Right lobe of liver (tissue), 6 donors: ENCODE measurements at regions of chr3 and their contacts with region 1.

Region 1: GRCh38 chr3:159252772-159253384 is 451.0 kb downstream of the MFSD1 start:
- DNase-seq: no peak
- ATAC-seq: peak; percentile 67 to 85 (median 75)
- H3K4me3 ChIP-seq: no peak overlapping the region
- H3K27ac ChIP-seq: no peak overlapping the region
- H3K4me1 ChIP-seq: no peaks in the 10 kb centered on the region
- H3K27me3 ChIP-seq: no peaks in the 10 kb centered on the region
- CTCF ChIP-seq: peak; percentile 63 to 91 (median 74)
- POLR2A ChIP-seq: no peak

Region 2: DNA sequence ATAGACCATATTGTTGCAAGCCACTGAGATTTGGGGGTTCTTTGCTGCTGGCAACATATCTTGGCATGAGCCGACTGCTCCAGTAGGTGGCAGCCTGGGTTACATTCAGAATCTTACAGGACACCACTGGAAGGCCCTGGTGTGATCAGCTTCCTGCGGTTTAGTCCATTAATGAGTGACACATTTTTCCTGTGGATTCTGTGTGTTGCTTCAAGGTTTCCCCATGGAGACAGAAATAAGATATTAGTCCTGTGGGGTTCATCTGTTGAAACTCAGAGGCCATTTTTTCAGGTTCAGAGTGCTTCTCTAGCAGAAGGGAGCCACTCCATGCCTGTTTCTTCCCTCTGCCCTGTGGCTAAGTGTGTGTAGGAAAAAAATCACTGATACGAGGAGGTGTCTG is 334.9 kb before region 1 on chr3:
- intact Hi-C with region 1: loop called in 1 of 2 experiments (anchors 10 kb)
- DNase-seq: peak in 2 of 3 donors; percentile 45 to 49
- ATAC-seq: peak; percentile 79 to 94 (median 90)
- H3K4me3 ChIP-seq: no peak overlapping the region
- H3K27ac ChIP-seq: no peak overlapping the region
- H3K4me1 ChIP-seq: no peaks in the 10 kb centered on the region
- H3K27me3 ChIP-seq: no peaks in the 10 kb centered on the region
- CTCF ChIP-seq: peak; percentile 60 to 69 (median 67)
- POLR2A ChIP-seq: no peak

Region 3: GRCh38 chr3:159130108-159130507 is 122.8 kb before region 1 on chr3:
- intact Hi-C with region 1: loop called (anchors 10 kb)
- DNase-seq: no peak
- ATAC-seq: peak; percentile 41 to 57 (median 48)
- H3K4me3 ChIP-seq: no peak overlapping the region
- H3K27ac ChIP-seq: no peak overlapping the region
- H3K4me1 ChIP-seq: peaks cover 0 to 8% (median 2%) of the 10 kb centered on the region in 4 donors
- H3K27me3 ChIP-seq: no peaks in the 10 kb centered on the region
- CTCF ChIP-seq: peak; percentile 40 to 57 (median 49)
- POLR2A ChIP-seq: no peak